HEK293 (cell line): ENCODE measurements at regions of chr15 and their contacts with region 1.

Region 1: DNA sequence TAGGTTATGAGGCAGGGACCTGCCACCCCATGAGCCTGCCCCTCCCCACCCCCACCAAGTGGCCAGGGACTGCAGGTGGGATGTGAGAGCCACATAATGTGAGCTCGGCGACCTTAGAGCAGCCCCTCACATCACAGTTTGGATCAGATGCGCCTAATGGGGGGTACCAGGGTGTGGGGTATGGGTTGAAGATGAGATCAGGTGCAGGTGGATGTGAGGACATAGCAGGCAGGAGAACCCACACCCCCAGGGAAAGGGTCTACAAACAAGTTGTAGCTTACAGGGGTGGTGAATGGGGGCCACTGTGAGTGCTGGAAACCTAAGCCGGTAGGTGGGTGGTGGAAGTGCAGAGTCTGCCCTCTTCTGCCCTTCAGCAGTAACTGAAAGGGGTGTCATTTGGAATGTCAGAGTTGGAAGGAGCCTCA is 94.0 kb downstream of the CORO2B start:
- H3K4me3 ChIP-seq: no peak overlapping the region
- H3K27ac ChIP-seq: no peak overlapping the region
- H3K4me1 ChIP-seq: no peaks in the 10 kb centered on the region
- CTCF ChIP-seq: peak; percentile 67

Region 2: GRCh38 chr15:68252925-68253534 is 419.8 kb before region 1 on chr15:
- CTCF ChIA-PET with region 1: interaction called, 14 read pairs
- POLR2A ChIA-PET with region 1: interaction called, 3 read pairs
- H3K4me3 ChIP-seq: no peak overlapping the region
- H3K27ac ChIP-seq: no peak overlapping the region
- H3K4me1 ChIP-seq: 0 out of 2 replicates have a peak, but pooled peaks cover 2% of the 10 kb centered on the region
- CTCF ChIP-seq: peak; percentile 80

Region 3: GRCh38 chr15:68418611-68419161 is 254.1 kb before region 1 on chr15:
- CTCF ChIA-PET with region 1: no interaction called
- POLR2A ChIA-PET with region 1: no interaction called
- H3K4me3 ChIP-seq: no peak overlapping the region
- H3K27ac ChIP-seq: no peak overlapping the region
- H3K4me1 ChIP-seq: peaks cover 5% of the 10 kb centered on the region; the same call in 1 of the 2 replicates
- CTCF ChIP-seq: no peak

Region 4: DNA sequence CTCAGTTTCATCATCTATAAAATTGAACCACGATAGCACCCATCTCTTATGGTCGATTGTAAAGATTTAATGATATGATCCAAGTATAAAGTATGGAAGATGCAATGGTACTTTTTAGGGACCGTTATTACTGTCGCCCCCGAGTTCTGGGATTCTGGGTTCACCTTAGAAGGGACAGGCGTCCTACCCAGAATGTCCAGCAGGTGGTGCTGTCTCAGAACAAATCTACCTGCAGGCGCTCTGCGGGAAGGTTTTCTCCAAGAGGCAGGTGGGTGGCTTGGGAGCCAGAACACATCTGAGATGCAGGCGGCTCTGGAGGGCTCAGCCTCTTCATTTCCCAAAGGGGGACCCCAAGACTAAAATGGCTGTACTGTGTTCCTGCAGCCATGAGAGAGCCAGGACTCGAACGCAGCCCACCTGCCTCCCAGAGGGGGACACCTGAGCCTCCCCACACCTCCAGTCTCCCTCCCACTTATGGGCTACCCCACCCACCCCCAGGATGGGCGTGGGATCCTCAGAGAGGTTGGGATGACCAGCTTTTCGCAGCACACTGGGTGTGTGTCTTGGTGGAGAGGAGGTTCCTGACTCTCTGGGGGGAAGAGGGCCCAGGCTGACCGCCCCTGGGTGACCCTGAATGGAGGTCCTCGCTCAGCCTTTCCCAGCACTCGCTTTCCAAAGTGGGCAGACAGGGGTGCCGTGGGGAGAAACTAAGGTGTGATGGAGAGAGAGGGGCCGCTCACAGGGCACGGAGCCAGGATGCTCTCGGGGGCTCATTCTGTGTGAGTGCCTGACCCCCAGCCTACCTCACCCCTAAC is 122.1 kb before region 1 on chr15:
- CTCF ChIA-PET with region 1: interaction called, 421 read pairs
- POLR2A ChIA-PET with region 1: interaction called, 6 read pairs
- H3K4me3 ChIP-seq: no peak overlapping the region
- H3K27ac ChIP-seq: no peak overlapping the region
- H3K4me1 ChIP-seq: no peaks in the 10 kb centered on the region
- CTCF ChIP-seq: peak; percentile 78

Region 5: DNA sequence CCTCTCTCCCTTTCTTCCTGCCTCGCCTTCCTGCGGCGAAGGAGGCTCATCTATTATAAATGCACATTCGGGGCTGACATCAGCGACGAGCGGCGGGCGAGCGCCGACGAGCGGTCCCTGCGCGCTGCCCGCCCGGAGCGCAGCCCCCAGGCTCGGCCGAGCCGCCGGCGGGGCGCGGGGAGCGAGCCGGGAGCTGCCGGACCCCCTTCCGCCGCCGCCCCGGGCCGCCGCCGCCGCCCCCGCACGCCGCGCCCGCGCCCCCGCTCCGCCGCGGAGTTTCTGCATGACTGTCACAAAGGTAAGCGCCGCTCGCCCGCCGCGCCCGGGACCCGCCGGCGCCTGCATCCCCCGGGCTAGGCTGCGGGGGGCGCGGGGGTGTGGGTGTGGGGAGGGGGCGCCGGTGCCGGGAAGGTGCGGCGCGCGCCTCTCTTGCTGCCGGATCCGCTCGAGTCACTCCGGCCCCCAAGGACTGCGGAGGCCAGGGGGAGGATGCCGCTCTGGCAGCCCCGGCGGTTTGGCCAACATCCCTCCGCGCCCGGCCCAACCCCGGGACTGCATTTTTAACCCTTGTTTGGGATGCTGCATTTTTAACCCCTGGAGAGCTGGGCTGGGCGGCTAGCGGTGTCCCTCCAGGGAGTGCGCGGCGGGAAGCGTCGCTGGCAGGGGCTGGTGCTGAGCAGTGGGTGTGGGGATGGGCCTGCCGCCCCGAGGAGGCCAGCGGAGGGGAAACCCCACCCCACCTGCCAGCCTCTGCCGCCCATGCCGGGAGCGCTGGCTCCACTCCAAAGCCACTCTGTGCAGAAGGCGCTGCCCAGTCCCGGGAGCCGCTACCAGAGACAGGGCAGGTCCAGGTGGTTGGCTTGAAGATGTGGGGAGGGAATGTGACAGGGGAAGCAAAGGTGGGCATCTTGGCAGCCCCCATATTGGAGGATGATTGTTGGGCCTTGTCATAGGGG is 93.5 kb before region 1 on chr15 and contains the start of gene CORO2B:
- CTCF ChIA-PET with region 1: interaction called, 31 read pairs
- POLR2A ChIA-PET with region 1: no interaction called
- H3K4me3 ChIP-seq: peak within 1 kb of the TSS; percentile 37
- H3K27ac ChIP-seq: peak within 1 kb of the TSS; percentile 81; the same call in 1 of the 2 replicates
- H3K4me1 ChIP-seq: peaks cover 13% of the 10 kb centered on the region
- CTCF ChIP-seq: peak; percentile 30

Region 6: DNA sequence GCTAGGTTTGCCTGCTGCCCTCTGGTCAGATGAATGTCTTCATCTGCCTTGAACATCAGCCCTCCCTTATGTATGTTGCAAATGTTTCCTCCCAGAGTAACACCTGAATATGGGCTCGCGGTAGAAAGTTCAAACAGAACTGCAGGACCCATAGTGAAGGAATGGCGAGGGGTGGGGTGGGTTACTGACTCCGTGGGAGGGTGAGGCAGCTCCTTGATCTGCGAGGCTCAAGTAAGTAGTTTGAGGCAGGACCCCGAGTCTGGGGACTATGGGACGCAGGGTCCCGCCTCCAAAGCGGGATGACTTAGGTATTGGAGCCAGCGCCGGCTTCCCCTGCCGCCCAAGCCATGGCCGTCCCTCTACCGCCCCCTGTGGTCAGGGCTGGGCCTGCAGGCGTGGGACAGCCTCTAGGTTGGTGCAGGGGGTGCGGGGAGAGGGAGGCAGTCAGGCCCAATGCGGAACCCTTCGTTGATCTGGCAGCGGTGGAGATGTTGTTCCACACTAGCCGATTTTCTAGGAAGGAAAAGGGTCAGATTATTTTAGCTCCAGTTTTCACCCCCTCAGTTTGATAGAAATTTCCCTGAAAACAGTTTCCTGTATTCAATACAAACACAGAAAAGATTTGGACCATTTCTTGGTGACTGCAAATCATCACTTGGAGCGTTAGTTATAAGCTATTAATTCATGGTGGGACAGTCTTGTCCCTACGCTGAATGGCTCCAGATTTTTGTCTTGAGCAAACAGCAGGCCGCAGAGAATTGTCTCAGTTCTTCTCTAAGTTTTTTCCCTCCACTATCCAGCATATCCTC is 21.7 kb before region 1 on chr15:
- CTCF ChIA-PET with region 1: interaction called, 23 read pairs
- POLR2A ChIA-PET with region 1: interaction called, 4 read pairs
- H3K4me3 ChIP-seq: no peak overlapping the region
- H3K27ac ChIP-seq: no peak overlapping the region
- H3K4me1 ChIP-seq: peaks cover 3% of the 10 kb centered on the region; the same call in 1 of the 2 replicates
- CTCF ChIP-seq: 0 out of 2 replicates have a peak, but pooled peaks have one; percentile 42

Region 7: GRCh38 chr15:68730471-68730919 is 57.7 kb after region 1 on chr15:
- CTCF ChIA-PET with region 1: interaction called, 12 read pairs
- POLR2A ChIA-PET with region 1: no interaction called
- H3K4me3 ChIP-seq: no peak overlapping the region
- H3K27ac ChIP-seq: no peak overlapping the region
- H3K4me1 ChIP-seq: no peaks in the 10 kb centered on the region; the same call in 1 of the 2 replicates
- CTCF ChIP-seq: peak; percentile 74

Region 8: GRCh38 chr15:68795298-68795848 is 122.6 kb after region 1 on chr15:
- CTCF ChIA-PET with region 1: no interaction called
- POLR2A ChIA-PET with region 1: no interaction called
- H3K4me3 ChIP-seq: no peak overlapping the region
- H3K27ac ChIP-seq: no peak overlapping the region
- H3K4me1 ChIP-seq: peaks cover 8% of the 10 kb centered on the region
- CTCF ChIP-seq: no peak

Region 9: GRCh38 chr15:69009341-69009740 is 336.5 kb after region 1 on chr15:
- CTCF ChIA-PET with region 1: no interaction called
- POLR2A ChIA-PET with region 1: no interaction called
- H3K4me3 ChIP-seq: no peak overlapping the region
- H3K27ac ChIP-seq: no peak overlapping the region
- H3K4me1 ChIP-seq: no peaks in the 10 kb centered on the region
- CTCF ChIP-seq: no peak

Region 10: DNA sequence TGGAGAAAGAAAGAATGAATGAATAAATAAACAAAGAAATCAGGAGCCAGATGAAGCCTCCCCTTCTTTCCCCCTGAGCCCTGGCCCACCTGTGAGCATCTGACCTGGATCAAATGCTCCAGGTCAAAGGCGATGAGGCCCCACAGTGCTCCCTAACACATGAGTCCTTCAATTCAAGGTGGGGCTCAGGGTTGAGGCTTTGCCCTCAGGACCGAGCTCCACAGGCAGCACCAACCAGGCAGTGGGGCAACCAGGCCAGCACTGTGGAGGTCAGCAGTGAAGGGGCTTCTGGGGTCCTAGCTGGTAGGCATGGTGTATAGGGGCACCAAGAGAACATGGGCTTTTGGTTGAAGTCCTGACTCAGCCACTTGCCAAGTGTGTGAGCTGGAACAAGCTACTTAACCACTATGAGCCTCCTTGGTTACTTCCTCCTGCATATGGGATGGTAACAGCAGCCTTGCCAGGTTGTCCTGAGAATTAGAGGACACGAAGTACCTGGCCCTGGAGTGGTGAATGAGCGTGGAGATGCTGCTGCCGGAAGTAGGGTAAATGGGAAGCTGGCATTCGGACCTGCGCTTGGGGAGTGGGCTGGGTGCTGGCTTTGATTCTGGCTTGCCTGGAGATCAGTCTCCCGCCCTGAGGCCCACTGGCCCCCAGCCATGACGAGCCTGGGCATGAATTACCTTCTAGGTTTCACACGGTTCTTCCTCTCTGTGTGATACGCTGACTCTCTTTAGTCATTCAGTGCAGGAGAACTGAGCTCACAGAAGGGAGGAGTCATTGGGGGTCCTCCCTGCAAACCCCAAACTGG is 615.9 kb after region 1 on chr15:
- CTCF ChIA-PET with region 1: no interaction called
- POLR2A ChIA-PET with region 1: no interaction called
- H3K4me3 ChIP-seq: no peak overlapping the region
- H3K27ac ChIP-seq: no peak overlapping the region
- H3K4me1 ChIP-seq: peaks cover 10% of the 10 kb centered on the region
- CTCF ChIP-seq: no peak